ENCODE measurements at regions of chr10 and their contacts with region 1.

Region 1: DNA sequence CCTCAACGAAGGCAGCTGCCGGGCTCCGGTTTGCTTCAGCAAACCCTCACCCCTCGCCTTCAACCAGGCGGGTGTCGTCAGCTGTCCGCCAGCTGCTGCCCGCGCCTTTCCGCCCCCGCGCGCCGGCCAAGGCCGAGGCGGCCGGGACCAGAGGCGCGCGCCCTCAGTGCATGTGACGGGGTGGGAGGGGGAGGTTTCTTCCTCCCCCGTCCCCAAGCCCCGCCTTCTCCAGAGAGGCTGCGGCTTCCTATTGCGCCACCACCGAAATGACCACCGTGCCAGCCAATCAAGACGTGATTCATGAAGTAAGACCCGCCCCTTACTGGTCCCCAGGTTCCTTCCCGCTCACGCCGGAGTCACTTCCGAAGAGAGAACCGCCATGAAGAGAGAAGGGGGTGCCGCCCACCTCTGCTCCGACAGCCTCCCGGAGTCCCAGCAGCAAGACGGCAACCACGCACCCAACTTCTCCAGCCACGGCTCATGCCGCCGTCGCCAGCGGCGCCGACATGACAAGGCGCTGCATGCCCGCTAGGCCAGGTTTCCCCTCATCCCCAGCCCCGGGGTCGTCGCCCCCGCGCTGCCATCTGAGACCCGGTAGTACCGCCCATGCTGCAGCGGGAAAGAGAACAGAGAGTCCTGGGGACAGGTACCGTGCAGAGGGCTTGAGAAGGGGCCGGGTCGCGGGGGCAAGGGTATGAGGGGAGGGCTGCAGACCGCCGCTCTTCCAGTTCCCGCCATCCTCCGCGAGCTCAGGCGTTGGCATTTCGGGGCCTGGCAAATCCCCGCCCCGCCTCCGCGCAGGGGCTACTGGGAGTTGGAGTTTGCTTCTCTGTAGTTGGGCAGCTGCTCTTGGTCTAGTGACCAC is at the start of gene SLF2:
- DNase-seq: peak; percentile 99
- H3K4me3 ChIP-seq: peak within 1 kb of the TSS; percentile 94 to 100
- H3K27ac ChIP-seq: peak within 1 kb of the TSS; percentile 90 to 93
- H3K4me1 ChIP-seq: peaks cover 11% of the 10 kb centered on the region
- H3K27me3 ChIP-seq: no peaks in the 10 kb centered on the region
- CTCF ChIP-seq: peak in 1 of 4 experiments; percentile 6
- POLR2A ChIP-seq: peak; percentile 77
- total RNA-seq, gene SLF2: 25.3 to 77.8 TPM

Region 2: DNA sequence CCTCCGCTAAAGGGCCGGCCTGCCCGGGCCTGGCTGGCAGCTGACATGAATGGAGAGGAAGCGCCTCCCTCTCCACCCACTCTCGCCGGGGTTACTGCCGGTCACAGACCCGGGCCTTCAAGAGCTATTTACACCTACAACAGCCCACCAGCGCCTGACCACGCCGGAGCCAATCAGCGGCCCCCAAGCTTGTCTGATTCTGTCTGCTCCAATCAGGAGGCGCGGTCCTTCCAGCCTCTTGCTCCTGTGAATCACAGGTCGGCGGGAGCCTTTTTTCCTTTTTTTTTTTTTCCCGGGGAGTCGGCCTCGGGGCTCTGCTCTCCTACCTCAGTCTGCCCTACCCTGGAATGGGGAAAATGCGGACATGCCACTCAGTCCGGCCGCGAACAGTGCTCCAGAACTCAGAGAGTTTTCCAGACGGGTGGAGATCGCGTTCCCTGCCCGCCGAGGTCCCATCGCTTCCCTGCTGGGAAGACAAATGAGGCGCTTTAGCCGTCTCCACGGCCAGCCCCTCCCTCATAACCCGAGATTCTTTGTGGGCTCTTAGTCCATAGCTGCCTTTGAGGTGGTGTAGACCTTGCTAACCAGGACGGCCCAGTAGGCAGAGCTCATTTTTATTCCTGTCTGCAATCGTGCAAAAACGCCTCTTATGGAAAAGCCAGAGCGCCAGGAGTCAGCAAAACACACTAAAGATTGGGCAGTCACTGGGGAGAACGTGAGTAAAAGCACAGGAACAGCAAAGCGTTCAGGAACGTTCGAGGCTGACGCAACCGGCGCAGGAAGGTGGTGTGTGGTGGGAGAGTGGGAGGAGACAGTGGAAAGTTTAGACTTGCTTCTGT is 539.3 kb before region 1 on chr10:
- intact Hi-C with region 1: loop called (anchors 5 kb)
- DNase-seq: peak; percentile 99
- H3K4me3 ChIP-seq: peak overlapping the region; percentile 52 to 55
- H3K27ac ChIP-seq: peak overlapping the region; percentile 98 to 99
- H3K4me1 ChIP-seq: peaks cover 15% of the 10 kb centered on the region
- H3K27me3 ChIP-seq: no peaks in the 10 kb centered on the region
- CTCF ChIP-seq: no peak
- POLR2A ChIP-seq: peak; percentile 64